GM10248 (cell line): ENCODE measurements at regions of chr6 and their contacts with region 1.

Region 1: GRCh38 chr6:138987640-138988468 is at the start of gene REPS1:
- DNase-seq: peak; percentile 96
- CTCF ChIP-seq: peak; percentile 84

Region 2: DNA sequence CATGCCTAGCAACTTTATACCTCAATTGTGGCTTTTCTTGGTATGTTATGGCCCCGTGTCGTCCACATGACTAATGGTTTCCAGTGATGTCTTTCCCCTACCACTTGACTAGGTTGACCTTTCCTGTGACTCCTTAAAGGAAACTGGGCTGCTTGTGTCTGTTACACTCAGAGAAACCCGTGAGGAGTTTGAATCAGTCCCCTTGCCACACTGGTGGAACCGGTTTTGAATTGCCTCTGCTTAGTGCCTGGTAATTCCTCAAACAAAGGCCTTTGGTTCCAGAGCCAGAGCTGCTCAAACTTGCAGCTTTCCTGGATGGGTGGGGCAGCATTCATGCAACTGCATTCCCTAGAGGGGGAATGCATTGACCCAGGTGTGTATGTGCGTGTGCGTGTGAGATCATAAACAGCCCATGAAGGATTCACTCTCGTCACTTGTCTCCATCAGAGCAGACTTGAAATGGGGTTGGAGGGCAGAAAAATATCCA is 170.0 kb before region 1 on chr6:
- CTCF ChIA-PET with region 1: interaction called, 96 read pairs
- POLR2A ChIA-PET with region 1: interaction called, 5 read pairs
- DNase-seq: peak; percentile 34
- CTCF ChIP-seq: no peak

Region 3: DNA sequence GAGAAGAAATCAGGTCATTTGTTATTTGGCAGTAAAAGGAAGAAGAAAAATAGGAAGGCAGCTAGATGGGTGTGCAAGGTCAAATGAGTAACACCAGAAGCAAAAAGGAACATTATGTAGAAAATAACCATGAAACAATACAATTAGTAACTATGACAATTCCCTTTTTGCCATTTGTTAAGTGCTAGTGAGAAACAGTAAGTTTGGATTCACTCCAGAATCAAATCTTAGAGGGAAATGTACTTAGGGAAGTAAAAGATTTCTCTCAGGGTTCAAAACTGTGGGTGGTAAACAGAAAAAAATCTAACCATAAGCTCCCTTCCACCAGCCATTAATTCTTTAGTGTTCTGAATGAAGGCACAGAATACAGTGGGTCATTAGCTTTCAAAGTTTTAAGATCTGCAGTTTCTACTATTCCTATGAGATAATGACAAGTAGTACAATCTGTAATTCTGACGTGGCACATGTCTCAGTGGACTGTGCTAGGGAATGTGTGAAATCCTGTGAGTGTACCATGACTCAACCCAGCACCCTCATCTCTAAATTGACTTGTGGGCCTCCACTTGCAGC is 16.9 kb before region 1 on chr6:
- CTCF ChIA-PET with region 1: interaction called, 50 read pairs
- POLR2A ChIA-PET with region 1: no interaction called
- DNase-seq: no peak
- CTCF ChIP-seq: no peak

Region 4: DNA sequence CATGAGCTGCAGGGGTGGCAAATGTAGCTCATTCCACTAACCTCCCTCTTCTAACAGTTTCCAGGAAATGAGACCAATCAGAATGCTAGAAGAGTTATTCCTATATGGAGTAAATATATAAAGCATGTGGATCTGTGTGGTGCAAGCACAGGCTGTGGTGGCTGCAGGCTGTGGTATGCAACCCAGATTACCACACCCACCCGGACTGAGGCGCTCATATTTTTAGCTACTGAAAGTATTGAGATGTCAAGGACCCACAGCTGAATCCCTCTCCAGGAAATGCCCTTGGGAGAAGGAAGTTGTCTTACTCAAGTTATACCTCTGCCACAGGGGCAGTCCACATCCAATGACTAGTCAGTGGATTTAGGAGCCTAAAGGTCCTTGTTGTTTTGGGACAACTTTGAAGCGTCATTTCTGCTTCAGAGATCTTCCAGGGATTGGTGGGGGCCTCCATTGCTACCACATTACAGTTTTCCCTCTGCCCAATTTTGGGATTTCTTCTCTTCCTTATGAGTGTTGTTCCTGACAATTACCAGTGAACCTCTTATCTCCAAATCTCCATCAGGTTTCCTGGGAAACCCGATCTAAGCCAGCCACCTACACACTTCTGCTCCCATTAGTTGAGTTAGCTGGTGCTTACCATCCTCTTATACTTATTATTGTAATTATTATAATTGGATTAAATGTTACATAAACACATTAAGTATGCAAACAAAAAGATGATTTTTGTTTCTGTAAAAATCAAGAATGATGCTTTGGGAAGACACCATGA is 12.3 kb after region 1 on chr6:
- CTCF ChIA-PET with region 1: interaction called, 18 read pairs
- POLR2A ChIA-PET with region 1: no interaction called
- DNase-seq: no peak
- CTCF ChIP-seq: no peak

Region 5: GRCh38 chr6:139008117-139008516 is 20.3 kb after region 1 on chr6:
- CTCF ChIA-PET with region 1: interaction called, 18 read pairs
- POLR2A ChIA-PET with region 1: no interaction called
- DNase-seq: no peak
- CTCF ChIP-seq: no peak

Region 6: GRCh38 chr6:139016337-139017213 is 28.7 kb after region 1 on chr6:
- CTCF ChIA-PET with region 1: interaction called, 27 read pairs
- POLR2A ChIA-PET with region 1: no interaction called
- DNase-seq: peak; percentile 46
- CTCF ChIP-seq: no peak

Region 7: DNA sequence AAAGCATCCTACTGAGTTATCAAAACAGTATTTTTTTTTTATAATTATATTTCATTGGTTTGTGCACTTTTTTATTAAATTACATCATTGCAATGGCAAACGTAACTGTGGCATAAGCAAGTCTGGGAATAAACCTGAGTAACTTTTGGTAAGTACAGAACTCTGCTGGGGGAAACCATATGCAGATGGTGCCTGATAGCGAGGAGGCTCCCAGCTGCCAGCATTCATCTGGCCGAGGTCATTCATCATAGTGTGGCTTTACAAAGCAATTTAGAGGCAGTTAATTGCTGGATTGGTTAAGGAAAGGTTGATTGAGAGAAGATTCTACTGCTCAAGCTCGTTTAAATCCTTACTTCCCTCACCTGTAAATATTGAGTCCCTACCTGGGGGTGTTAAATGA is 199.6 kb after region 1 on chr6:
- CTCF ChIA-PET with region 1: no interaction called
- POLR2A ChIA-PET with region 1: no interaction called
- DNase-seq: no peak
- CTCF ChIP-seq: no peak

Region 8: GRCh38 chr6:139240161-139241010 is 252.5 kb after region 1 on chr6:
- CTCF ChIA-PET with region 1: no interaction called
- POLR2A ChIA-PET with region 1: no interaction called
- DNase-seq: no peak
- CTCF ChIP-seq: no peak